ENCODE measurements at regions of chr9 and their contacts with region 1.

Region 1: GRCh38 chr9:107282753-107283625 is at the start of gene RAD23B:
- DNase-seq: peak; percentile 99
- ATAC-seq: peak; percentile 84 to 95 (median 87)
- H3K4me3 ChIP-seq: peak within 1 kb of the TSS; percentile 87
- H3K4me3 Mint-ChIP-seq: peak within 1 kb of the TSS; percentile 99
- H3K27ac ChIP-seq: peak within 1 kb of the TSS; percentile 91
- H3K27ac Mint-ChIP-seq: peak within 1 kb of the TSS; percentile 88 to 92
- H3K4me1 ChIP-seq: peaks cover 14% of the 10 kb centered on the region
- H3K4me1 Mint-ChIP-seq: peaks cover 42 to 48% of the 10 kb centered on the region in 2 donors
- H3K27me3 ChIP-seq: no peaks in the 10 kb centered on the region
- H3K27me3 Mint-ChIP-seq: peaks cover 0 to 6% of the 10 kb centered on the region in 2 donors
- CTCF ChIP-seq: no peak
- total RNA-seq, gene RAD23B: 85.6 to 101 (median 92.6) TPM

Region 2: DNA sequence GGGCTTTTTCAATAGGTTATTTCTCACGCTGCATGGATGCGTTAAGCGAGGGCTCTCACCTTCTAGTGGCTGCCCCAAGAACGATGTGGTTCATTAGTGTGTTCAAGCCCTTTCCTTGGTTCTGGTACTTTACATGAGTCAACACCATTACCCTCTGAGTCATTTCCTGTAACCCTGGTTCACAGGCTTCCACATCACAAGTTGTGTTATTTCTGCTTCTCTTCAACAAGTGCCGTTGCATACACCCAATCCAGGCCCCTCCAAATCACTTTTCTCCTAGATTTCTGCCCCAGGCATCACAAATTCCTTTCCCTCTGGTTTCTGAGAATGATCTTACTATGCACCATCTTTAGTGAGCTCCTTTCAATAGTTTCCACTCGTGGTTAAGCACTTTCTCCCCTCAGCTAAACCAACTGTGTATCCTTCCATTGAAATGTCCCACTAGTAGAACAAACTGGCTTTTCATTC is 69.4 kb before region 1 on chr9:
- intact Hi-C with region 1: loop called (anchors 1 kb)
- DNase-seq: peak; percentile 43 to 53
- ATAC-seq: peak; percentile 93 to 99 (median 95)
- H3K4me3 ChIP-seq: no peak overlapping the region
- H3K4me3 Mint-ChIP-seq: peak overlapping the region; percentile 37
- H3K27ac ChIP-seq: peak overlapping the region; percentile 75
- H3K27ac Mint-ChIP-seq: peak overlapping the region; percentile 82 to 93
- H3K4me1 ChIP-seq: peaks cover 18% of the 10 kb centered on the region
- H3K4me1 Mint-ChIP-seq: peaks cover 22 to 41% of the 10 kb centered on the region in 2 donors
- H3K27me3 ChIP-seq: no peaks in the 10 kb centered on the region
- H3K27me3 Mint-ChIP-seq: peaks cover 0 to 2% of the 10 kb centered on the region in 2 donors
- CTCF ChIP-seq: no peak

Region 3: DNA sequence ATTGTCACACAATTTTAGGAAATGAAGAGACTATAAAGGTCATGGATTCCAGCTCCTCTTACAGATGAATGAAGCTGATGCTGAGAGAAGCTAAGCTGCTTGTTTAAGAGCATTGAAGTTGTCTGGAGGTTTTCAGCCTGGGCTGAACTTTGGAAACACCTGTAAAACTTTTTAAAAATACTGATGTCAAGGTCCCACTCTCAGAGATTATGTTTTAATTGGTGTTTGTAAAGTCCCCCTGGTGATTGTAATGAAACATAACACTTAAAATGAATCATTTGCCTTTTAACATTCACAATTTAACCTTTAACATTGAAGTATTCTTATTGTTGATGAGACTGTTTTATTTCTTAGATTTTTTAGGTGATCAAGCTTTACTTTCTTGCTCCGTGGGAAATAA is 16.4 kb after region 1 on chr9:
- intact Hi-C with region 1: loop called (anchors 1 kb)
- DNase-seq: peak in 1 of 2 donors; percentile 40
- ATAC-seq: peak in 2 of 3 donors; percentile 50 to 64
- H3K4me3 ChIP-seq: no peak overlapping the region
- H3K4me3 Mint-ChIP-seq: no peak overlapping the region
- H3K27ac ChIP-seq: no peak overlapping the region
- H3K27ac Mint-ChIP-seq: peak overlapping the region; percentile 44 to 52
- H3K4me1 ChIP-seq: no peaks in the 10 kb centered on the region
- H3K4me1 Mint-ChIP-seq: peaks cover 30 to 41% of the 10 kb centered on the region in 2 donors
- H3K27me3 ChIP-seq: no peaks in the 10 kb centered on the region
- H3K27me3 Mint-ChIP-seq: no peaks in the 10 kb centered on the region
- CTCF ChIP-seq: peak; percentile 57